Activated CD8-positive, alpha-beta T cell treated with anti-CD3 and anti-CD28 coated beads for 36 hours (primary cell): ENCODE measurements at regions of chr19 and their contacts with region 1.

Region 1: GRCh38 chr19:531009-531752 is 379 bp upstream of the CDC34 start:
- DNase-seq: peak; percentile 88
- ATAC-seq: peak; percentile 84
- H3K4me3 Mint-ChIP-seq: peak overlapping the region; percentile 81
- H3K27ac Mint-ChIP-seq: peak overlapping the region; percentile 88
- H3K4me1 Mint-ChIP-seq: peaks cover 22% of the 10 kb centered on the region
- H3K27me3 Mint-ChIP-seq: no peaks in the 10 kb centered on the region
- CTCF ChIP-seq: no peak

Region 2: GRCh38 chr19:408898-409515 is 122.2 kb before region 1 on chr19 and contains the start of gene C2CD4C:
- CTCF ChIA-PET with region 1: no interaction called
- POLR2A ChIA-PET with region 1: no interaction called
- intact Hi-C with region 1: no loop called
- DNase-seq: peak; percentile 36
- ATAC-seq: peak; percentile 38
- H3K4me3 Mint-ChIP-seq: peak within 1 kb of the TSS; percentile 62
- H3K27ac Mint-ChIP-seq: no peak within 1 kb of the TSS
- H3K4me1 Mint-ChIP-seq: peaks cover 6% of the 10 kb centered on the region
- H3K27me3 Mint-ChIP-seq: peaks cover 9% of the 10 kb centered on the region
- CTCF ChIP-seq: no peak
- total RNA-seq, gene C2CD4C: 0.13 to 0.25 TPM

Region 3: GRCh38 chr19:506404-507285 is 24.5 kb before region 1 on chr19:
- CTCF ChIA-PET with region 1: interaction called, 45 read pairs
- POLR2A ChIA-PET with region 1: interaction called, 20 read pairs
- intact Hi-C with region 1: no loop called
- DNase-seq: peak; percentile 97
- ATAC-seq: peak; percentile 66
- H3K4me3 Mint-ChIP-seq: peak overlapping the region; percentile 91
- H3K27ac Mint-ChIP-seq: peak overlapping the region; percentile 99
- H3K4me1 Mint-ChIP-seq: peaks cover 35% of the 10 kb centered on the region
- H3K27me3 Mint-ChIP-seq: no peaks in the 10 kb centered on the region
- CTCF ChIP-seq: peak; percentile 96

Region 4: DNA sequence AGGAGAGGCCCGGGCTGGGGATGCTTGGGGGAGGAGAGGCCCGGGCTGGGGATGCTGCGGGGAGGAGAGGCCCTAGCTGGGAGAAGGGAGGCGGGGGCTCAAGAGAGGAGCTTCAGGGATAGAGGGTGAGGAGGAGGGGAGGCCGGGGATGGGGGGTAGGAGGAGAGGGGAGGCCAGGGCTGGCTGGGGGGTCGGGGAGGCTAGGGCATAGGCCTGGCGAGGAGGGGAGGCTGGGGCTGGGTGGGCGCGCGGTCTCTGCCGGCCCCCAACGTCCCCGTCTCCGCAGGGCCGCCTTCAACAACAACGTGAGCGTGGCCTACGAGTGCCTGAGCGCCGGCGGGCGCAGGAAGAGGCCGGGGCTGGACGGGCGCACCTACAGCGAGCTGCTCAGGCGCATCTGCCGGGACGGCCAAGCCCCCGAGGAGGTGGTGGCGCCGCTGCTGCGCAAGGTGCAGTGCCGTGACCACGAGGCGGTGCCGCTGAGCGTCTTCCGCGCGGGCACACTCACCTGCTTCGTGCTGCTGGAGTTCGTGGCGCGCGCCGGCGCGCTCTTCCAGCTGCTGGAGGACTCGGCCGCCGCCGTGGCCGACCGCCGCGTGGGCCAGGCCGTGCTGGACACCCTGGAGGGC is 12.5 kb before region 1 on chr19:
- CTCF ChIA-PET with region 1: interaction called, 24 read pairs
- POLR2A ChIA-PET with region 1: interaction called, 9 read pairs
- intact Hi-C with region 1: no loop called
- DNase-seq: peak; percentile 72
- ATAC-seq: peak; percentile 92
- H3K4me3 Mint-ChIP-seq: no peak overlapping the region
- H3K27ac Mint-ChIP-seq: no peak overlapping the region
- H3K4me1 Mint-ChIP-seq: peaks cover 5% of the 10 kb centered on the region
- H3K27me3 Mint-ChIP-seq: no peaks in the 10 kb centered on the region
- CTCF ChIP-seq: peak; percentile 23

Region 5: GRCh38 chr19:542173-542866 is 11.1 kb after region 1 on chr19:
- CTCF ChIA-PET with region 1: interaction called, 16 read pairs
- POLR2A ChIA-PET with region 1: interaction called, 7 read pairs
- intact Hi-C with region 1: no loop called
- DNase-seq: no peak
- ATAC-seq: no peak
- H3K4me3 Mint-ChIP-seq: no peak overlapping the region
- H3K27ac Mint-ChIP-seq: no peak overlapping the region
- H3K4me1 Mint-ChIP-seq: peaks cover 17% of the 10 kb centered on the region
- H3K27me3 Mint-ChIP-seq: no peaks in the 10 kb centered on the region
- CTCF ChIP-seq: no peak

Region 6: GRCh38 chr19:572140-572742 is 41.1 kb after region 1 on chr19 and contains the start of gene BSG:
- CTCF ChIA-PET with region 1: interaction called, 3 read pairs
- POLR2A ChIA-PET with region 1: interaction called, 11 read pairs
- intact Hi-C with region 1: no loop called
- DNase-seq: peak; percentile 99
- ATAC-seq: peak; percentile 86
- H3K4me3 Mint-ChIP-seq: peak within 1 kb of the TSS; percentile 87
- H3K27ac Mint-ChIP-seq: peak within 1 kb of the TSS; percentile 95
- H3K4me1 Mint-ChIP-seq: peaks cover 39% of the 10 kb centered on the region
- H3K27me3 Mint-ChIP-seq: no peaks in the 10 kb centered on the region
- CTCF ChIP-seq: no peak
- total RNA-seq, gene BSG: 159 to 160 TPM